HepG2 (cell line): ENCODE measurements at regions of chr15 and their contacts with region 1.

Region 1: GRCh38 chr15:99895189-99895955 is 162.1 kb upstream of the LYSMD4 start:
- DNase-seq: no peak
- ATAC-seq: no peak
- H3K4me3 ChIP-seq: no peak overlapping the region
- H3K27ac ChIP-seq: no peak overlapping the region
- H3K4me1 ChIP-seq: 0 out of 2 replicates have a peak, but pooled peaks cover 7% of the 10 kb centered on the region
- H3K27me3 ChIP-seq: no peaks in the 10 kb centered on the region
- CTCF ChIP-seq: no peak
- EP300 ChIP-seq: no peak
- POLR2A ChIP-seq: no peak
- RAD21 ChIP-seq: no peak

Region 2: DNA sequence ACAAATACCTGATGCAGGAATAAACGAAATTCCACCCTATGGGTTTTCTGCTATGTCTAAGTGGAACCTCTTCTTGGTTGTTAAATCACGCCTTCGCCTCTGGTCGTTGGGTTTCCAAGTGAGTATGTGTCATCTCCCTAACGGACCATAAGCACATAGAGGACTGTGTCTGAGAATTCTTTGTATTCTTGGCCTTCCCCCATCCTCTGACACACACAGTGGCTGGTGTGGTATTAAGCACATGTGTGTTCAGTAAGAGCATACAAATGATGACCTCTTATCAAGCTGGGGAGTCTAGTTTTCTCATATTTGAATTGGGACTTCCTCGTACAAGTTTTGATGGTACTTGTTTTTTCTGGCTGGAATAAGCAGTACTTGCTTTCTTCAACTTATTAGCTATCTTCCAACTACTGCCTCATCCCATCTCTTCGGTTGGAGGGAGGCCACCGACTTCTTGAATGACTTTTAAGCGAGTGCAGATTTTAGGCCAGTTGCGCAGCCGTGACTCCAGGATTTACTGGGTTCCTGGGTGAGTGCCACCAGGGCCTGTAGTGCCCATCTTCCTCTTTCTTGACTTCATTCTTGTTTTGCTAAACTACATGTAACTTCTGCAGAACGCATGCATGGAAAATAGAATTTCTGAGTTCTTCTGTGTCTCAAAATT is 206.2 kb after region 1 on chr15:
- CTCF ChIA-PET with region 1: no interaction called
- POLR2A ChIA-PET with region 1: no interaction called
- in situ Hi-C with region 1: no loop called
- intact Hi-C with region 1: loop called (anchors 5 kb)
- DNase-seq: no peak
- ATAC-seq: no peak
- H3K4me3 ChIP-seq: no peak overlapping the region
- H3K27ac ChIP-seq: no peak overlapping the region
- H3K4me1 ChIP-seq: no peaks in the 10 kb centered on the region
- H3K27me3 ChIP-seq: peaks cover 0 to 1% of the 10 kb centered on the region in 2 experiments; a peak in 1 of 5 replicates
- CTCF ChIP-seq: no peak
- EP300 ChIP-seq: no peak
- POLR2A ChIP-seq: no peak
- RAD21 ChIP-seq: no peak